ENCODE measurements at regions of chr10 and their contacts with region 1.

Region 1: DNA sequence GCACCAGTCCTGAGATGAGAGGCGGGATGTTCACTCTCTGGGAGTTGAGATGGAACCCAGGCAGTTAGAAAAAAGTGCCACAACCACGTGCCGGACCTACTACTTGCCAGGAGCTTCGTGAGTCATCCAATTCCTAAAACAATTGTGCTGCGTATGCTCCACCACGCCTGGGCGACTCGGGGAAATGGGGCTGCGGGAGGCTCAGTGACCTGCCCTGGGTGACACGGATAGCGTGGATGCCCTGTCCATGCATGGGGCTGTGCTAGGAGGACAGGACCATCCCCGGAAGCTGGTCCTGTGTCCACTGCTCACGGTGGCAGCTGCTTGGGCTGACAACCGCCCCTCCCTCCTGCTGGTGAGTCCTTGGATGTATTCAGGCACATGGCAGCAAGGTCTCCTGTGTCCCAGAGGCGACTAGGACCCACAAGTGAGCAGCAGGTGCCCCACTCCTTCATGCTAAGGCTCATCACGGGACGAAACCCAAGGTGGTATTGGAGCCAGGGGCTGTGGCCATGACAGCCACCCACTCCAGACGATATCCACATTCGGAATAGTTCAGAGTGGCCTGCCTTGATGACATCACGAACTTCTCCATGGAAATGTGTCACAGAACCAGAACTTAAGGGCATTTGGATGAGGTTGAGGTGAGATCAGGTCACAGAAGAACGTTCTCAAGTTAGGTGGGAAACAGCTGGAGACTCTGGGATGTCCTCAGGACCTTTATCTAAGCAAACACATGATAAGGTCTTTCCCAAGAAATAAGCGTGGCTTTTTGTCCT is 90.5 kb downstream of the BMS1 start:
- DNase-seq: no peak
- ATAC-seq: no peak
- H3K4me3 ChIP-seq: no peak overlapping the region
- H3K27ac ChIP-seq: no peak overlapping the region
- H3K4me1 ChIP-seq: no peaks in the 10 kb centered on the region
- H3K27me3 ChIP-seq: no peaks in the 10 kb centered on the region

Region 2: DNA sequence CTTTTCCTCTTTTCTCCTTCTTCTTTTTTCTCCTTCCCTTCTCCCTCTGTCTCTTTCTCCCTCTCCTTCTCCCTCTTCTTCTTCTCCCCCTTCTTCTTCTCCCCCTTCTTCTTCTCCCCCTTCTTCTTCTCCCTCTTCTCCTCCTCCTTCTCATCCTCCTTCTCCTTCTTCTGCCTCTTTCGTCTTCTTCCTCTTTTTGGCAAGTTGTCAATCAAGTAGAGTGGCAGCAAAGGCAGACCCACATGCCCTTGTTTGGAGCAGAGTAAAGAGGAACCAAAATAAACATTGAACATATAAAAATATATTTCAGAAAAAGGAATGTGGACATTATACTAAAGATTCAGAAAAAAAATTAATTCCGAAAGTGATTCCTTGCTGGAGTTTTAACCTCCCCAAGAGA is 175.1 kb before region 1 on chr10:
- intact Hi-C with region 1: no loop called
- DNase-seq: no peak
- ATAC-seq: no peak
- H3K4me3 ChIP-seq: no peak overlapping the region
- H3K27ac ChIP-seq: no peak overlapping the region
- H3K4me1 ChIP-seq: no peaks in the 10 kb centered on the region
- H3K27me3 ChIP-seq: no peaks in the 10 kb centered on the region

Region 3: DNA sequence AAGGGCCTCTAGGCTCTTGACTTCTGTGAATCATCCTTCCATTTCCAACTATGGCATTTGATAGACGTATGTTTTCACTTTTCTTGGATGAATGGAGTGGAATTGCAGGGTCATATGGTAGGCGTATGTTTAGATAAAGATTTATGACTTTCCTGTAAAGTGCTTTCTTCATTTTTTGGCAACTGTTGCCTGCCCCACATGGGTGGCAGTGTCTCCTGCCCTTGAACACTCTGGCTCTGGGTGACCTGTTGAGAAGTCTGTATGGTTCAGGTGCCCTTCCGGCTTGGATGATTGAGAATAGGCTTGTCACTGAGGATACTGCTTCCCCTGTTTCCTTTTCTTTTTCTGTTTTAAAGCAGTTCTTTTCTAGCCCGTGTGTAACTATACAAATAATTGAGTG is 226.9 kb after region 1 on chr10:
- intact Hi-C with region 1: loop called in 3 of 4 experiments (anchors 5 to 10 kb)
- DNase-seq: no peak
- ATAC-seq: no peak
- H3K4me3 ChIP-seq: no peak overlapping the region
- H3K27ac ChIP-seq: no peak overlapping the region
- H3K4me1 ChIP-seq: no peaks in the 10 kb centered on the region
- H3K27me3 ChIP-seq: no peaks in the 10 kb centered on the region